ENCODE measurements at regions of chr11 and their contacts with region 1.

Region 1: GRCh38 chr11:416757-417621 is 2.2 kb upstream of the SIGIRR start:
- DNase-seq: peak in 6 of 10 donors; percentile 13 to 52 (median 45)
- ATAC-seq: peak; percentile 20 to 33
- H3K4me3 Mint-ChIP-seq: peak overlapping the region in 9 of 10 donors; percentile 92 to 100 (median 98)
- H3K27ac Mint-ChIP-seq: peak overlapping the region in 3 of 10 donors; percentile 31 to 95 (median 92)
- H3K4me1 Mint-ChIP-seq: peaks cover 9 to 44% (median 32%) of the 10 kb centered on the region in 4 donors
- H3K27me3 Mint-ChIP-seq: no peaks in the 10 kb centered on the region

Region 2: DNA sequence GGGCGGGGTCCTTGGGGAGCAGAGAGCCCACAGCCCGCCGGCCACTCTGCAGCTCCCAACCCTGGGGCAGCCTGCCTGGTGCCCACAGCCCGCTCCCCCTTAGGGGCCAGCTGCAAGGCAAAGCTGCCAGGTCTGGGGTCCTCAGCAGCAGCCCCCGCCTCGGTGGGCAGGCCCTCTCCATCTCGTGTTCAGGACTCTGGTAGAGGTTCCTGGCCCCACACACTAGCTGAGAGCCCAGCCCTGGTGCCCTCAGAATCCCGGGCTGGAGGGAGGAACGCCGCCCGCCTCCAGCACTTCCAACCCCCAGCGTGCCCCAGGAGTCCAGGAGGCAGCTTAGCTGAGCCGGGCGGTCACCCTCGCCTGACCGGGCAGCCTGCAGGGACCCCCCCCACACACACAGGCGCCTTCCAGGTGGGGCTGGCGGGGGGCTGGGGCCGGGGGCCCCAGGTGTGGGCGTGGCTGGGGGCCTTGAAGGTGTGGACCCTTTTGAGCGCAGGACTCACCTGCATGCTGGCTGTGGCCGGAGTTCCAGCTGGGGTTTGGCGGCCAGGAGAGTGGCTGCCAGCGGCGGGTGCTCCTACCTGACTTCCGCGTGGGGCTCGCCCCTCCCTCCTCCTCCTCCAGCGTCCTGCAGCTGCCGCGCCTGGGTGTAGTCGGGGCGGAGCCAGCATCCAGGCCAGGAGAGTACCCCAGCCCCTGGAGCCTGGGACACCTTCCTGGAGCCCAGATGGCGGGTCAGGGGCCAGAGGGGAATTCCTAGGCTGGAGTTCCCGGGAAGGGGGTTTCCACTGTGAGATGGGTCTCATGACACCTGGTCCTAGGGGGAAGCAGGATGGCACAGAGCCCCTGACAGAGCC is 24.7 kb after region 1 on chr11 and contains the start of gene ANO9:
- POLR2A ChIA-PET with region 1: interaction called, 144 read pairs
- DNase-seq: peak; percentile 35 to 74 (median 53)
- ATAC-seq: peak; percentile 95 to 98
- H3K4me3 Mint-ChIP-seq: peak within 1 kb of the TSS; percentile 60 to 84 (median 72)
- H3K27ac Mint-ChIP-seq: peak within 1 kb of the TSS in 8 of 10 donors; percentile 41 to 87 (median 62)
- H3K4me1 Mint-ChIP-seq: peaks cover 9 to 33% (median 27%) of the 10 kb centered on the region in 4 donors
- H3K27me3 Mint-ChIP-seq: no peaks in the 10 kb centered on the region
- polyA plus RNA-seq, gene ANO9: 4.8 to 8.6 (median 7.3) TPM

Region 3: DNA sequence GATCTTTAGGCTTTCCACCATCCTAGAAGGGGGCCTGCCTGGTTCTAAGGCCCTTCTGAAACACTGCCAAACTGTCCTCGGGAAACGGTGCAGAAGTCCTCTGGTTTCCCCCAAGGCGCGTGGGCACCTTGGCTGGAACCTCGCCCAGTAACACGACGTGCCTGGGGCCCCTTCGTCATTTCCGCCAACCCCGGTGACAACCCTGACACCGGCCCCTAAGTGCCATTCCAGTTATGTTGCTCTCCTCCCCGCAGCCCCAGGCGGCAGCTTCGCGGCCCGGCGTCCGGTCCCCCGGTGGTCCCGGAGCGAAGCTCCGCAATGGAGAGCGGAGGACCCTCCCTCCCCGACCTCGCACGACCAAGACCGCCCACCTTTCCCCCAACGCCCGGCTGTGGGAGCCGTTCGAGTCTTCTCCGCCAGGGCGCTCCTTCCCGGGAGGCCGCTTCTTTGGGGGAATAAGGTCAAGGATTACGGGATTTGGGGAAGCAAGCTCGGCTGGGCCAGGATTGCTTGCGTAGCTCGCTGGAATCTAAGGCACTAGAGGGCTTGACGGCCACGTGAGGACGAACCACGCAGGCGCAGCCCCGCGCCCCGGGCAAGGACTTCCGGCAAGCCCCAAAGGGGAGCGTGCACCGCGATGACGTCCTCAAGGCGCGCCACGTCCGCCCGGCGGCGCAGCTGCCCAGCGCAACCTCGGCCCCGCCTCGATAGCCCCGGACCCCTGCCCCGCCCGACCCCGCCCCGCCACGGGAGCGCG is 89.4 kb after region 1 on chr11:
- POLR2A ChIA-PET with region 1: interaction called, 21 read pairs
- DNase-seq: peak; percentile 92 to 98 (median 96)
- ATAC-seq: peak; percentile 75 to 76
- H3K4me3 Mint-ChIP-seq: peak overlapping the region; percentile 95 to 99 (median 98)
- H3K27ac Mint-ChIP-seq: peak overlapping the region; percentile 97 to 100 (median 100)
- H3K4me1 Mint-ChIP-seq: peaks cover 8 to 40% (median 25%) of the 10 kb centered on the region in 4 donors
- H3K27me3 Mint-ChIP-seq: no peaks in the 10 kb centered on the region

Measured in naive thymus-derived CD8-positive, alpha-beta T cell (primary cell).